PC-9 (cell line): ENCODE measurements at regions of chr10 and their contacts with region 1.

Region 1: DNA sequence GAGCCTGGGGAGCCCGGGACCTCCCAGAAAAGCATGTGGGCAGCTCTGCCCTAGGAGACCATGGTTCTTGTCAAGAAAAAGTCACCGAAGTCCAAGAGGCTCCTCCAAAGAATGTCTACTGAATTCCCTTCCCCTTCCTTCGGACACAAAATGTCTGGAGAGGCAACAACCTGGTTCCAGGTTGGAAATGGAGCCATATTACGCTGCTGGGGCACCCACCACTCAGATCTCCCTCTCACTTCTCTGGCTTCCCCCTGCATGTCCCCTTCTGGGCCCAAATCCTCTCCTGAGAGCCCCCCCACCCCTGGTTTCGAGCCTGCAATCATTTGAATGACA is 52.6 kb downstream of the RGS10 start:
- DNase-seq: no peak
- H3K4me3 ChIP-seq: no peak overlapping the region; the same call in 1 of the 2 replicates
- H3K27ac ChIP-seq: no peak overlapping the region
- H3K4me1 ChIP-seq: peaks cover 3% of the 10 kb centered on the region
- H3K27me3 ChIP-seq: no peaks in the 10 kb centered on the region
- CTCF ChIP-seq: peak; percentile 24; the same call in 1 of the 2 replicates

Region 2: GRCh38 chr10:118958984-118959916 is 530.7 kb before region 1 on chr10:
- CTCF ChIA-PET with region 1: no interaction called
- POLR2A ChIA-PET with region 1: no interaction called
- intact Hi-C with region 1: no loop called
- DNase-seq: peak; percentile 65 to 87
- H3K4me3 ChIP-seq: peak overlapping the region; percentile 24; the same call in 1 of the 2 replicates
- H3K27ac ChIP-seq: peak overlapping the region; percentile 92
- H3K4me1 ChIP-seq: peaks cover 49% of the 10 kb centered on the region
- H3K27me3 ChIP-seq: no peaks in the 10 kb centered on the region
- CTCF ChIP-seq: no peak

Region 3: GRCh38 chr10:119199231-119199992 is 290.5 kb before region 1 on chr10:
- CTCF ChIA-PET with region 1: no interaction called
- POLR2A ChIA-PET with region 1: no interaction called
- intact Hi-C with region 1: loop called (anchors 2 kb)
- DNase-seq: peak; percentile 27 to 44
- H3K4me3 ChIP-seq: no peak overlapping the region
- H3K27ac ChIP-seq: no peak overlapping the region
- H3K4me1 ChIP-seq: peaks cover 22% of the 10 kb centered on the region
- H3K27me3 ChIP-seq: no peaks in the 10 kb centered on the region
- CTCF ChIP-seq: peak; percentile 63

Region 4: GRCh38 chr10:119416855-119417254 is 73.1 kb before region 1 on chr10:
- CTCF ChIA-PET with region 1: interaction called, 14 read pairs
- POLR2A ChIA-PET with region 1: no interaction called
- intact Hi-C with region 1: loop called (anchors 1 kb)
- DNase-seq: peak in 1 of 2 experiments; percentile 55
- H3K4me3 ChIP-seq: no peak overlapping the region
- H3K27ac ChIP-seq: no peak overlapping the region
- H3K4me1 ChIP-seq: no peaks in the 10 kb centered on the region
- H3K27me3 ChIP-seq: no peaks in the 10 kb centered on the region
- CTCF ChIP-seq: peak; percentile 78

Region 5: DNA sequence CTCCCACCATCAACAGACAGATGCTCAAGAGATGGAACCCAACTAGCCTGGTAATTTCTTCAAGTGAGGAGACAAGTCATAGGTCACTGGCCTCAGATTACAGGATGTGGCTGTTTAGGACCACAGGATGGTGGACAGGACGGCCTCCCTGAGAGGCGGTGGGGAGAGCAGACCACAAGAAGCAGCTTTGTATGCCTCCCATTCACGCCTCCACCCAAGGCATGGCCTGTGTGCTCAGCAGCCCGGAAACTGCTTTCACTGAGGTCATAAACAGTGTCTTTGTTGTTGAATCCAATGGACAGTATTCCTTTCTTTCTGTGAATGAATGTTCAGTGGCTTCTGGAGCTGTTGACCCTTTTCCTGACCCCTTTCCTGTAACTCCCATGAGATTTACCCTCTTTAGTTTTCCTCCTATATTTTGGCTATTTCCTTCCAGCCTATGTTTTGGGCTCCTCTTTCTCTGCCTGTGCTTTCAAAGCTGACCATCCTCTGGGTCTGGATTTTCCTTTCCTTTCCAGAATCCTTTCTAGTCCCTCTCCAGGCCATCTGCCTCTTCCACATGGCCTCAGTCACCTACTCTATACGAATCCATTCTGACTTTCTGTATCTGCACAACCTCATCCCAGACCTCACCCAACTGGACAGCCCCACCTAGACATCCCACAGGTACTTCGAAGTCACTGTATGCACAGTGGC is 203.5 kb after region 1 on chr10:
- CTCF ChIA-PET with region 1: no interaction called
- POLR2A ChIA-PET with region 1: no interaction called
- intact Hi-C with region 1: no loop called
- DNase-seq: no peak
- H3K4me3 ChIP-seq: no peak overlapping the region
- H3K27ac ChIP-seq: no peak overlapping the region
- H3K4me1 ChIP-seq: peaks cover 5% of the 10 kb centered on the region
- H3K27me3 ChIP-seq: no peaks in the 10 kb centered on the region
- CTCF ChIP-seq: no peak